H1 (cell line): ENCODE measurements at regions of chr2 and their contacts with region 1.

Region 1: DNA sequence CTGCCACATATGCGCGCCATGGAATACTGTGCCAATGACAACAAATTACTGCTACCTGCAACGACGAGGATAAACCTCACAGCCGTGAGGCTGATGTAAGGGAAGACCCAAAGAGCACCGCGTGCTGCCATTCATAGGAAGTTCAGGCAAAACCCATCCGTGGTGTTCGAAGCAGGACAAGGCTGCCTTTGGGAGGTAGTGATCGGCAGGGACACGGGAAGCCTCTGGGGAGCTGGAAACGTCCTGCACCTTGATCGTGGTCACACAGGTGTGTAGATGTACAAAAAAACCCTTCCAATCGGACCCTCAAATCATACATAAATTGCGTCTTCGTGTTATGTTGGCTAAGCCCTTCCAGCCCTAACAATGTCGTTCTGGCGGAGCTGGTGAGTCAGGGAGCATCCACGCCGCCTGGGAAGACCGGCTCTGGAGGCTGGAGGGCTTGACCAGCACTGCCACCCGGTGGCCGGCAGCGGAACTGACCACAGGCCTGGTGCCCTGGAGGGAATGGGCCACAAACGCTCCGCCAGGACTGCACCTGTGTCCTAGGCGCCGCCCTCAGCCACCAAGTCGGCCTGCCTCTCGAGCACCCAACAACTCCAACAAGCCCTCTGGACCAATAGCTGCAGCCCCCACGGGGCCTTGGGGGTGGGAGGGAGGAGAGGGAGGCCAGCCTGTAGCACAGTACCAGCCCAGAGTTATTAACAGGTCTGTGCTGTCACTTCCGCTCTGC is 4.1 kb upstream of the NEURL3 start:
- DNase-seq: peak; percentile 90 to 99
- H3K4me3 ChIP-seq: peak overlapping the region in 3 of 4 experiments; percentile 28 to 53 (median 40); a peak in 6 of 8 replicates
- H3K27ac ChIP-seq: no peak overlapping the region
- H3K4me1 ChIP-seq: peaks cover 0 to 6% (median 5%) of the 10 kb centered on the region in 4 experiments; a peak in 3 of 7 replicates
- H3K27me3 ChIP-seq: peaks cover 4 to 14% (median 10%) of the 10 kb centered on the region in 4 experiments
- CTCF ChIP-seq: peak in 2 of 3 experiments; percentile 98 to 99; a peak in 3 of 4 replicates
- EP300 ChIP-seq: no peak
- POLR2A ChIP-seq: no peak
- RAD21 ChIP-seq: peak; percentile 96

Region 2: GRCh38 chr2:96359310-96359709 is 150.0 kb before region 1 on chr2:
- CTCF ChIA-PET with region 1: interaction called, 11 read pairs
- POLR2A ChIA-PET with region 1: no interaction called
- DNase-seq: no peak
- H3K4me3 ChIP-seq: no peak overlapping the region
- H3K27ac ChIP-seq: no peak overlapping the region
- H3K4me1 ChIP-seq: no peaks in the 10 kb centered on the region
- H3K27me3 ChIP-seq: no peaks in the 10 kb centered on the region
- CTCF ChIP-seq: peak; percentile 24 to 42 (median 32); a peak in 3 of 4 replicates
- EP300 ChIP-seq: no peak
- POLR2A ChIP-seq: no peak
- RAD21 ChIP-seq: peak; percentile 37 to 51; a peak in 3 of 4 replicates

Region 3: DNA sequence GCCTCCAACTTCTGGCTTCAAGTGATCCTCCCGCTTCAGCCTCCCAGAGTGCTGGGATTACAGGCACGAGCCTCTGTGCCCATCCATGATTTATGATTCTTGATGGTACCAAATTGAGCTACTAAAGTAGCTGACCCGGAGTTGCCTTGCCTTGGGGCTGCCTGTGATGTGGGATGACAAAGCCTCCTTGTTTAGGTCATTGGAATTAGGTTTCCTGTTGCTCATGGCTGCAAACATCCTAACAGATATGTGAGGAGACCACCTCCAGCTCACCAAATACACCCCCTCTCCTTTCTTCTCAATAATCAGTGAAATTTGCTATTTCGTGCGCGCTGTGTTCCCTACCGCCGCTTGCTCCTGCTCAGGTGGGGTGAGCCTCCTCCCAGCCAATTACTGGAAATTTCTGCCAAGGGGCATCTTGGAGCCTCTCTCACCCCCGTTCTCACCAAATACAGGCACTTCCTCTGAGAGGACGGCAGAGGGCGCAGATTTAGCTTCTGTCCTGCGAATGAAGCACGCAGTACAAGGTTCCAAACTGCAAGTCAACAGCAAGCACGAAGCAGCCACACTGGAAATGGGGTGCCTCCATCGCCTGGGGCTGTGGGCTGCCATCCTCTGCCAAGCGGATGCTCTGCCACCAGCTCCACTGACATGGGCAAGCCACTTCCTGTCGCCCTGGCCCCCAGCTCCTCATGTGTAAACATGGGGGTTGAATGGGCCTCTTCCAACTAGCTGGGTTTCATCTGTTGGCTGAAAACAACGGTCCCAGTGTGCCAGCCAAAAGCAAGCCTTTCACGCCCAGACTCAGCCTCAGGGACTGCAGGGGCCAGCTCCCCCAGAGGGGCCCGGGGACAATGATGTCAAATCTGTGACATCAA is 102.0 kb before region 1 on chr2:
- CTCF ChIA-PET with region 1: interaction called, 171 read pairs
- POLR2A ChIA-PET with region 1: no interaction called
- DNase-seq: peak; percentile 53 to 78
- H3K4me3 ChIP-seq: no peak overlapping the region
- H3K27ac ChIP-seq: no peak overlapping the region
- H3K4me1 ChIP-seq: peaks cover 3 to 7% (median 4%) of the 10 kb centered on the region in 4 experiments
- H3K27me3 ChIP-seq: no peaks in the 10 kb centered on the region; a peak in 1 of 7 replicates
- CTCF ChIP-seq: peak; percentile 78 to 92 (median 88)
- EP300 ChIP-seq: no peak
- POLR2A ChIP-seq: no peak
- RAD21 ChIP-seq: peak; percentile 72 to 81

Region 4: GRCh38 chr2:96485350-96485749 is 23.9 kb before region 1 on chr2:
- CTCF ChIA-PET with region 1: interaction called, 17 read pairs
- POLR2A ChIA-PET with region 1: no interaction called
- DNase-seq: no peak
- H3K4me3 ChIP-seq: no peak overlapping the region
- H3K27ac ChIP-seq: no peak overlapping the region
- H3K4me1 ChIP-seq: peaks cover 0 to 14% (median 4%) of the 10 kb centered on the region in 4 experiments; a peak in 5 of 7 replicates
- H3K27me3 ChIP-seq: peaks cover 0 to 3% (median 0%) of the 10 kb centered on the region in 4 experiments; a peak in 1 of 7 replicates
- CTCF ChIP-seq: no peak
- EP300 ChIP-seq: no peak
- POLR2A ChIP-seq: no peak
- RAD21 ChIP-seq: no peak

Region 5: DNA sequence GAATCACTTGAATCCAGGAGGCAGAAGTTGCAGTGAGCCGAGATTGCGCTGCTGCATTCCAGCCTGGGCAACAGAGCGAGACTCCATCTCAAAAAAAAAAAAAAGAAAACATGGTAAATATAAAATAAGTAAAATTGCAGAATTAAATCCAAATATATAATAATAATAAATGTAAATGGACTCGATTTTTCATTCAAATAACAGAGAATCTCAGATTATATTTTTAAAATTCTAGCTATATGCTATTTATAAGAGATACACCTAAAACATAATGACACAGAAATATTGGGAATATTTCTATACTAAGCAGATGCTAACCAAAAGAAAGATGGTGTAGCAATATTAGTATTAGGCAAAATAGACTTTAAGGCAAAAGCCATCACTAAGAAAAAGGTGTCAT is 11.0 kb after region 1 on chr2:
- CTCF ChIA-PET with region 1: interaction called, 14 read pairs
- POLR2A ChIA-PET with region 1: no interaction called
- DNase-seq: no peak
- H3K4me3 ChIP-seq: no peak overlapping the region
- H3K27ac ChIP-seq: no peak overlapping the region
- H3K4me1 ChIP-seq: no peaks in the 10 kb centered on the region
- H3K27me3 ChIP-seq: no peaks in the 10 kb centered on the region; a peak in 1 of 7 replicates
- CTCF ChIP-seq: no peak
- EP300 ChIP-seq: no peak
- POLR2A ChIP-seq: no peak
- RAD21 ChIP-seq: no peak

Region 6: DNA sequence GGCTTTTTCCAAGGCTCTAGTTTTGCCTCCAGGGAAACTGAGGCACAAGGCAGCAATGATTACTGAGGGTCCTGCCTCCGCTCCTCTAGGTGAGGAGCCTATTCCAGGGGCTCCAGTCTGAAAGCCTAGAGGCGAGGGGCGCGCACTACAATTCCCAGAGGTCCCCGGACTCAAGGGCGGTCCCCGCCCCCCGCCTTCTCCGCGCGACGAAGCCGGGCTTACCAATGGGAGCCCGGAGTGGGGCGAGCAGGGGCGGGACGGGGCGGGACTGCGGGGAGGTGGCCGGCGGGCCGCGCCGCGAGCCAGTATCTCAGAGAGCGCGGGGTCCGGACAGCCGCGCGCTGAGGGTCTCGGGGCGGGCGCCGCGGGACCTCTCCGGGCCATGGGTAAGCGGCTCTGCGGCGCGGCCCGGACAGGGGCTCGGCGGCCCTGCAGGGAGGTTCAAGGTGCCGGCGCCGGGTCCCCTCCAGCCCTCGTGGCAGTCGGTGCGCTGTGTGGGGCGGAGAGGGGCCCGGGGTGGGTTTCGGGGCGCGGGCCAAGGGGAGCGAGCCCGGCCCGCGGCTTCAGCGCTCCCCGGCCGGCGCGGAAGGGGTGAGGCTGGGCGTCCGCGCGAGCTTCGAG is 27.3 kb after region 1 on chr2 and contains the start of gene ARID5A:
- CTCF ChIA-PET with region 1: interaction called, 19 read pairs
- POLR2A ChIA-PET with region 1: interaction called, 3 read pairs
- DNase-seq: peak; percentile 73 to 89
- H3K4me3 ChIP-seq: peak within 1 kb of the TSS; percentile 19 to 73 (median 53)
- H3K27ac ChIP-seq: no peak within 1 kb of the TSS
- H3K4me1 ChIP-seq: peaks cover 5 to 26% (median 20%) of the 10 kb centered on the region in 4 experiments
- H3K27me3 ChIP-seq: peaks cover 10 to 32% (median 26%) of the 10 kb centered on the region in 4 experiments; a peak in 6 of 7 replicates
- CTCF ChIP-seq: no peak
- EP300 ChIP-seq: no peak
- POLR2A ChIP-seq: peak in 1 of 2 experiments; percentile 44; a peak in 2 of 3 replicates
- RAD21 ChIP-seq: no peak
- total RNA-seq, gene ARID5A: 4.4 and 5.3 TPM in 2 replicates

Region 7: GRCh38 chr2:96554293-96555145 is 45.2 kb after region 1 on chr2:
- CTCF ChIA-PET with region 1: interaction called, 28 read pairs
- POLR2A ChIA-PET with region 1: no interaction called
- DNase-seq: peak in 1 of 2 experiments; percentile 90
- H3K4me3 ChIP-seq: no peak overlapping the region
- H3K27ac ChIP-seq: no peak overlapping the region
- H3K4me1 ChIP-seq: peaks cover 0 to 9% (median 4%) of the 10 kb centered on the region in 4 experiments; a peak in 4 of 7 replicates
- H3K27me3 ChIP-seq: no peaks in the 10 kb centered on the region; a peak in 1 of 7 replicates
- CTCF ChIP-seq: peak in 2 of 3 experiments; percentile 84 to 95; a peak in 3 of 4 replicates
- EP300 ChIP-seq: no peak
- POLR2A ChIP-seq: no peak
- RAD21 ChIP-seq: peak; percentile 76 to 84